ENCODE measurements at regions of chr9 and their contacts with region 1.

Region 1: GRCh38 chr9:136944519-136945279 is at the starts of genes C8G and FBXW5:
- DNase-seq: peak; percentile 97 to 98
- ATAC-seq: peak; percentile 89
- H3K4me3 ChIP-seq: peak within 1 kb of the TSS; percentile 72 to 76
- H3K27ac ChIP-seq: peak within 1 kb of the TSS in 1 of 2 donors; percentile 14
- H3K4me1 ChIP-seq: no peaks in the 10 kb centered on the region
- H3K27me3 ChIP-seq: no peaks in the 10 kb centered on the region
- total RNA-seq, gene C8G: 0.90 to 1.1 TPM
- total RNA-seq, gene FBXW5: 92.5 to 107 TPM

Region 2: DNA sequence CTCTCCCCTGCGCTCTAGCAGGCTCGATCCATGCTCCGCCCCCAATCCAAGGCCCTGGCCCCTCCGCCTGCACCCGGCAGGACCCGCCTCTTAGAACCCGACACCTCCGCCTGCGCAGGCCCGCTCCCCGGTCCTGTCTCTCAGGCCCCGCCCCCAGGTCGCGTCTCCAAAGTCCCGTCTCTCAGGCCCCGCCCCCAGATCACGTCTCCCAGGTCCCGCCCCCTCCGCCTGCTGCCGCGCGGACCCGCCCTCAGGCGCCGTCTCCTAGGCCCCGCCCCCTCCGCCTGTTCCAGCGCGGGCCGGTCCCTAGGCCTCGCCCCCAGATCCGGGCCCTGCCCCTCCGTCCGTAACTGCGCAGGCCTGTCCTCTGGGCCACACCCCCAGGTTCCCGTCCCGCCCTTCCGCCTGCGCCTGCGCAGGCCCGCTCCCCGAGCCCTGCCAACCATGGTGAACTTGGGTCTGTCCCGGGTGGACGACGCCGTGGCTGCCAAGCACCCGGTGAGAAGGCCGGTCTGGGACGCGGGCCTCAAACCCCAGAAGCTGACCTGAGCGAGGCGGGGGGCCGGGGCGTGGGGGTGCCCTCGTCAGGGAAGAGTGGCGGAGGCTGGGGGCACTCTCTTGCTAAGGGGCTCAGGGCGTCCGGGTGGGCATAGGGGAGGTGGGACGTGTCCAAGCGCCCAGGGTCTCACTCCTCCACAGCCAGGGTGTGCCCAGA is 153.6 kb before region 1 on chr9 and contains the start of gene TMEM141:
- intact Hi-C with region 1: loop called (anchors 5 to 10 kb)
- DNase-seq: peak; percentile 100
- ATAC-seq: peak; percentile 99
- H3K4me3 ChIP-seq: peak within 1 kb of the TSS; percentile 23 to 40
- H3K27ac ChIP-seq: peak within 1 kb of the TSS in 1 of 2 donors; percentile 7
- H3K4me1 ChIP-seq: no peaks in the 10 kb centered on the region
- H3K27me3 ChIP-seq: no peaks in the 10 kb centered on the region
- total RNA-seq, gene TMEM141: 26.6 to 27.0 TPM

Region 3: GRCh38 chr9:136849038-136849959 is 95.4 kb before region 1 on chr9 and contains the start of gene PHPT1:
- intact Hi-C with region 1: loop called in 1 of 2 experiments (anchors 5 kb)
- DNase-seq: peak; percentile 99
- ATAC-seq: peak; percentile 95
- H3K4me3 ChIP-seq: peak within 1 kb of the TSS; percentile 52 to 83
- H3K27ac ChIP-seq: peak within 1 kb of the TSS in 1 of 2 donors; percentile 88
- H3K4me1 ChIP-seq: no peaks in the 10 kb centered on the region
- H3K27me3 ChIP-seq: no peaks in the 10 kb centered on the region
- total RNA-seq, gene PHPT1: 65.6 to 84.1 TPM

Region 4: DNA sequence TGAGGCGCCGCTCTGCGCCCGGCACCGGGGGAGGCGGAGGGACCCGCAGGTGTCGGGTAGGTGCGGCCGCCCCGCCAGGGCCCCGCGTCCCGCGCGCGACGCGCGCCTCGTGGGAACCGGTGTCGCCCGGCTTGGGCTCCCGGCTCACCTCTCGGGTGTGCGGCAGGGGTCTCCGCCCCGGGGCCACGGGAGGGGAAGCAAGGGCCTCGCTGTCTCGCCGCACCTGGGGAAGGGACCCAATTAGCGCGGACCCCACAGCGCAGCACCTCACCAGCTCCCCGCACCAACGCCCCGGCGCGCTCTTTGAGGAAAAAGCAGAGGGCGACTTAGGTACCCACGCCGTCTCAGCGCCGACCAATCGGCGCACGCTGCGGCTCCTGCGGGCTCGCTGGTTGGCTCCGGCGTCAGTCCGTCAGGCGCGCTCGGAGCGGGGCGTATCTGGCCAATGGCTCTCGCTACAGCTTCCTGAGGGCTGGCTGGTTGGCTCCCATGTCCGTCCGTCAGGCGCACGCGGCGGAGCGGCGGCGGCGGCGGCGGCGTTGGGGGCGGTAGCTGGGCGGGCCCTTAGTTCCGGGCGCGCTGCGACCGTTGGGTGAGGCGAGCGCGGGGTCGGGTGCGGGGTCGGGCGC is 58.6 kb before region 1 on chr9 and contains the start of gene TRAF2:
- intact Hi-C with region 1: loop called (anchors 10 kb)
- DNase-seq: peak; percentile 99
- ATAC-seq: peak; percentile 98
- H3K4me3 ChIP-seq: peak within 1 kb of the TSS; percentile 77 to 82
- H3K27ac ChIP-seq: no peak within 1 kb of the TSS
- H3K4me1 ChIP-seq: no peaks in the 10 kb centered on the region
- H3K27me3 ChIP-seq: no peaks in the 10 kb centered on the region
- total RNA-seq, gene TRAF2: 9.1 to 22.1 TPM

Region 5: GRCh38 chr9:136978073-136978864 is 33.6 kb after region 1 on chr9:
- intact Hi-C with region 1: no loop called
- DNase-seq: peak; percentile 80 to 91
- ATAC-seq: peak; percentile 76
- H3K4me3 ChIP-seq: peak overlapping the region in 1 of 2 donors; percentile 18
- H3K27ac ChIP-seq: no peak overlapping the region
- H3K4me1 ChIP-seq: no peaks in the 10 kb centered on the region
- H3K27me3 ChIP-seq: no peaks in the 10 kb centered on the region

Region 6: DNA sequence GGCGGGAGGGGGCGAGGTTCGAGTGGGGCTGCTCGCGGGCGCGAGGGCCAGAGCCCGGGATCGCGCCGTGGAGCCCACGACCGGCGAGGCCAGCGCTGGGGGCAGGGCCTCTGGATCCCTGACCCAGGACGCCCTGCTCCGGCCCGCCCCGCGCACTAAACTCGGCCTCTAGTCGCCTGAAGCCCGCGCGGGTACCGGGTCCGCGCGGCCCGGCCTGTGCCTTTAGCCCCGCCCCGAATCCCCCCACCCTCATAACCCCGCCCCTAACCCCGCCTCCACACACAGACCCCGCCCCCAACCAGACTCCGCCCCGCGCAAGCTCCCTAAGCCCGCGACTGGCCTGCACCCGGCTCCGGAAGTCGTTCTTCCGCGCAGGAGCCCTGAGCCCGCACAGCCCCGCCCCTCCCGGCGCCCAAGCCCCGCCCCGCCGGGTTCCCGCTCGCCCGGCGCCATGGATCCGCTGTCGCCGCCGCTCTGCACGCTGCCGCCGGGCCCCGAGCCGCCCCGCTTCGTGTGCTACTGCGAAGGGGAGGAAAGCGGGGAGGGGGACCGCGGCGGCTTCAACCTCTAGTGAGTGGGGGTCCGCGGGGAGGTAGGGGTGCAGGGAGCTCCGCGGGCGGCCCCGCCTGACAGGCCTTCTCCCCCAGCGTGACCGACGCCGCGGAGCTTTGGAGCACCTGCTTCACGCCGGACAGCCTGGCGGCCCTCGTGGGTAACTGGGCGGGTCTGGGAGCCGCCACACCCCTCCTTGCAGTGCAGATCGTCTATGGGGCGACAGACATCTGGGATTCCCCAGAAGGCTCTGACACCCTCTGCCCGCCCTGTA is 47.5 kb after region 1 on chr9 and contains the start of gene PAXX:
- intact Hi-C with region 1: loop called in 1 of 2 experiments (anchors 5 kb)
- DNase-seq: peak; percentile 96 to 98
- ATAC-seq: peak; percentile 94
- H3K4me3 ChIP-seq: peak within 1 kb of the TSS; percentile 65 to 85
- H3K27ac ChIP-seq: no peak within 1 kb of the TSS
- H3K4me1 ChIP-seq: peaks cover 0 to 4% of the 10 kb centered on the region in 2 donors
- H3K27me3 ChIP-seq: no peaks in the 10 kb centered on the region
- total RNA-seq, gene PAXX: 27.8 to 42.0 TPM

Region 7: DNA sequence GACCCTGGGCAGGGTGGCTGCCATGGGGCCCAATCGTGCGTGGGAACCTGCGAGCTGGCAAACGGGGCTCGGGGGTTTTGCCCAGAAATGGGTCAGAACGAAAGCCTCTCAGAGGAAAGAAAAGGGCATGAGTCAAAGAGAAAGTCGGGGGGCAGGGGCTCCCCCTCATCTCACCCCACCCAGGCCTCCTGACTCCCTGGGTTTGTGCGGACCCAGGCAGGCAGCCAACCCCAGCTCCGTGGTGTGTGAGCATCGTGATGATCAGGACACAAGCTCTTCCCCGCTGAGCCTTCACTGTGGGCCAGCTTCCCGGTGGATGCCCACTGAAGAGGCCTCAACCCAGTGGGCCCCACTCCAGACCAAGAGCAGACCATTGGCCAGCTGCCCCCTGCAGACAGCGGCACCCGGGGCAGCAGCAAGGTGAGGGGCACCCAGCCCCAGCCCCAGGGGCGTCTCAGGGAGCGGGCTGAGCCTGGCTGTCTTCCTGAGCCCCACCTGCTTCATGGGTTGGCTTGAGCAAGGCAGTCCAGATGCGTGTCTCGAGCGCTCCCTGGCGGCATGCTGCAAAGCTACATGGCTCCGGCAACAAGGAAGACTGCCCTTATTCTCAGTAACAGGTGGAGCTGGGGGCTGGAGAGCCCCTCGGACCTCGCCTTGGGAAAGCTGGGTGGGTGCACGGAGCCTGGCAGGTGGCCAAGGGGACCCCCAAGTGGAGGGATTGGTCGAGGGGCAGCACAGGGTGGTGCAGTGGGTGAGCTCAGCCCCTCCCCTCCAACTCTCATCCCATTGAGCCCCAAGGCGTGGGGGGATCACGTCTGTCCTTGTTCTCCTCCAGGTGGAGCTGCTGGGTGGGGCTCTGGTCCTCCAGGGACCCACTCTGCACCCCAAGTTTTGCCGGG is 90.4 kb after region 1 on chr9:
- intact Hi-C with region 1: loop called in 1 of 2 experiments (anchors 5 kb)
- DNase-seq: peak; percentile 89 to 94
- ATAC-seq: peak; percentile 83
- H3K4me3 ChIP-seq: no peak overlapping the region
- H3K27ac ChIP-seq: no peak overlapping the region
- H3K4me1 ChIP-seq: no peaks in the 10 kb centered on the region
- H3K27me3 ChIP-seq: no peaks in the 10 kb centered on the region